ENCODE measurements at regions of chr22 and their contacts with region 1.

Region 1: DNA sequence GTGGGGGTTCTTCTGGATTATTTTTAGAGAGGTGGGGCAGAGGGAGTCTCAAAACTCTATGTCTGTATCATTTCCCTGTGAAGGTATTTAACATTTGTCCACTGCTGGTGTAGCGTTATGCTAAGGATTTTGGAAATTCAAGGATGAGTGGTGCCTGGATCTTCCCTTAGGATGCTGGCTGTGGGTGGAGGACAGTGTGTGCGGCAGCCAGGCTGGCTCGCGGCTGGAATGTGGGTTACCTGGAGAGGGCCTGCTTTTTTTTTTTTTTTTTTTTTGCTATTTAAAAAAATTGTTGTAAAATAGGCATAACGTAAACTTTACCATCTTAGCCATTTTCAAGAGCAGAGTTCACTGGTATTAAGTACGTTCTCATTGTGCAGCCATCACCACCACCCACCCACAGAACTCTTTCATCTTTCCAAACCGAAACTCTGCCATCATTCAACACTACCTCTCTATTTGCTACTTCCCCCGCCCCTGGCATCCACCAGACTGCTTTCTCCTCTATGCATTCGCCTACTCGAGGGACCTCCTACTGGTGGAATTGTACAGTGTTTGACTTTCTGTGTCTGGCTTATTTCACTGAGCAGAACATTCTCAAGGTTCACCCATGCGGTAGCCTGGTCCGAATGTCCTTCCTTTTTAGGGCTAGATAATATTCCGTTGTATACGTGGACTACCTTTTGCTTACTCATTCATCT is 67.1 kb downstream of the PARVB start:
- DNase-seq: no peak
- ATAC-seq: no peak
- H3K4me3 ChIP-seq: no peak overlapping the region
- H3K27ac ChIP-seq: no peak overlapping the region
- H3K4me1 ChIP-seq: peaks cover 3 to 32% (median 12%) of the 10 kb centered on the region in 9 donors
- H3K27me3 ChIP-seq: no peaks in the 10 kb centered on the region
- CTCF ChIP-seq: no peak

Region 2: GRCh38 chr22:44329179-44329796 is 238.1 kb after region 1 on chr22:
- intact Hi-C with region 1: loop called in 1 of 10 experiments (anchors 10 kb)
- DNase-seq: no peak
- ATAC-seq: no peak
- H3K4me3 ChIP-seq: no peak overlapping the region
- H3K27ac ChIP-seq: no peak overlapping the region
- H3K4me1 ChIP-seq: peaks cover 4 to 23% (median 15%) of the 10 kb centered on the region in 9 donors
- H3K27me3 ChIP-seq: peaks cover 8 to 68% (median 41%) of the 10 kb centered on the region in 7 donors
- CTCF ChIP-seq: no peak